ENCODE measurements at regions of chr22 and their contacts with region 1.

Region 1: DNA sequence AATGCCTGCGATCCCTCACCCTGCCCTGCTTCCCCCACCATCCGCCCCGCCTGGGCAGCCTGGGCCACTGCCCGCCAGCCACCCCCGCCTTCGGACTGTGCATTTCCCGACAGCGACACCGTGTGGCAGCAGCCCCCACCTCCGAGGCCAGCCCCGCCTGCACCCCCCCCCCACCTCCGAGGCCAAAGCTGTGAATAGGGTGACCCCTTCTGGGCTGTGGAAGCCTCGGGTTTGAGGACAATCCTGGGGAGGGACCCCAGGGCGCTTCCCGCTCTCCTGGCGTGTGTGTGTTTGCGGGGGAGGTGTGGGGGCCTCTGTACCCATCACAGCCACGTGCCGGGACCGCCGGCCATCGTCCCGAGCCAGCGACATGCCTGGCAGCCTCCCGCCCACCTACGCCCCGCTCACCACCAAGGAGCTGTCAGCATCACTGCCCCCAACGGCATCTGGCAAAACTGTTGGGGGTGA is 33.8 kb upstream of the PPARA start:
- DNase-seq: peak; percentile 90
- ATAC-seq: peak; percentile 95
- H3K4me3 Mint-ChIP-seq: no peak overlapping the region
- H3K27ac Mint-ChIP-seq: no peak overlapping the region
- H3K4me1 Mint-ChIP-seq: no peaks in the 10 kb centered on the region
- H3K27me3 Mint-ChIP-seq: no peaks in the 10 kb centered on the region
- CTCF ChIP-seq: peak; percentile 83

Region 2: DNA sequence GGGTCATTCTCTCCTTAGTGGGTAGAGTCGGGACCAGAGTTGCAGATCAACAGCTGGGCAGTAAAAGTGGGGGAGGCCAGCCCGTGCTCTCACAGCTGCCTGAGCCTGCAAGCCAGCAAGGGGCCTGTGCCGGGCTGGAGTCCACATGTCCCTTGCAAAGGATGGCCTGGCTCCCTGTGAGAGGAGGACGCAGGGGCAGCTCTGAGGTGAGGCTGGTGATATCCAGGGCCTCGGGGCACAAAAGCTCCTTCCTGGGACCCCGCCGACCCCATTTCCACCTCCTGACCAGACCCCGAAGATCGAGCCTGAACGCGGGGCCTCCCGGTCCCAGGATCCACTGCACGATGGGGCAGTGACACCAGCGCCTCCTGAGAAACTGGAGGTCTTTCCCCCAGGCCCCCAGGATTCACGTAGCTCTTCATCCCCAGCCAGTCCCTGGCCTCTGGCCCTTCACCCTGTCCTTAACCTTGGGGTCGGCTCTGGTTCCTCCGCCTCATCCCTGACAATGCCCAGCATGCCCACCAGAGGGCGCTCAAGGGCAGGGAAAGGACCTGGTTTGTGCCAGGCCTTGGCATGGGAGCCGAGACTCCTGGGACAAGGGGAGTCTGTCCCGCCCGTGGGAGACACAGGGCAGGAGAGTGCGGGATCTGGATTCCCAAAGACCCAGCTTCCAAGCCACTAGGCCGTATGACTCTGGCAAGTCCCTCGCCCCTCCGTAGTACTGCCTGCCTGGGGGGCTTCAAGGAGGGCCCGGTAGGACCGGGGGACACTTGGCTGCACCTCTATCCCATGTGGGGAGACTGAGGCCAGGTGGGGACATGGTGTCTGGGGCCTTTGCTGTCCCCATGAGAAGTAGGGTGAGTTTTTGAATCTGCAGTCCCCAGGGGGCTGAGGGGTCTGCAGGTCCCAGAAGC is 121.8 kb before region 1 on chr22:
- CTCF ChIA-PET with region 1: interaction called, 78 read pairs
- POLR2A ChIA-PET with region 1: interaction called, 7 read pairs
- intact Hi-C with region 1: loop called (anchors 2 kb)
- DNase-seq: peak; percentile 83
- ATAC-seq: peak; percentile 81
- H3K4me3 Mint-ChIP-seq: no peak overlapping the region
- H3K27ac Mint-ChIP-seq: no peak overlapping the region
- H3K4me1 Mint-ChIP-seq: no peaks in the 10 kb centered on the region
- H3K27me3 Mint-ChIP-seq: peaks cover 2% of the 10 kb centered on the region
- CTCF ChIP-seq: peak; percentile 96

Region 3: GRCh38 chr22:46013460-46014416 is 102.8 kb before region 1 on chr22:
- CTCF ChIA-PET with region 1: interaction called, 110 read pairs
- POLR2A ChIA-PET with region 1: interaction called, 3 read pairs
- intact Hi-C with region 1: loop called (anchors 5 kb)
- DNase-seq: peak; percentile 95
- ATAC-seq: peak; percentile 99
- H3K4me3 Mint-ChIP-seq: peak overlapping the region; percentile 76
- H3K27ac Mint-ChIP-seq: peak overlapping the region; percentile 87
- H3K4me1 Mint-ChIP-seq: peaks cover 4% of the 10 kb centered on the region
- H3K27me3 Mint-ChIP-seq: no peaks in the 10 kb centered on the region
- CTCF ChIP-seq: peak; percentile 73

Region 4: GRCh38 chr22:46019351-46019750 is 97.2 kb before region 1 on chr22:
- CTCF ChIA-PET with region 1: interaction called, 21 read pairs
- POLR2A ChIA-PET with region 1: no interaction called
- intact Hi-C with region 1: loop called (anchors 5 kb)
- DNase-seq: no peak
- ATAC-seq: no peak
- H3K4me3 Mint-ChIP-seq: no peak overlapping the region
- H3K27ac Mint-ChIP-seq: no peak overlapping the region
- H3K4me1 Mint-ChIP-seq: no peaks in the 10 kb centered on the region
- H3K27me3 Mint-ChIP-seq: no peaks in the 10 kb centered on the region
- CTCF ChIP-seq: no peak

Region 5: DNA sequence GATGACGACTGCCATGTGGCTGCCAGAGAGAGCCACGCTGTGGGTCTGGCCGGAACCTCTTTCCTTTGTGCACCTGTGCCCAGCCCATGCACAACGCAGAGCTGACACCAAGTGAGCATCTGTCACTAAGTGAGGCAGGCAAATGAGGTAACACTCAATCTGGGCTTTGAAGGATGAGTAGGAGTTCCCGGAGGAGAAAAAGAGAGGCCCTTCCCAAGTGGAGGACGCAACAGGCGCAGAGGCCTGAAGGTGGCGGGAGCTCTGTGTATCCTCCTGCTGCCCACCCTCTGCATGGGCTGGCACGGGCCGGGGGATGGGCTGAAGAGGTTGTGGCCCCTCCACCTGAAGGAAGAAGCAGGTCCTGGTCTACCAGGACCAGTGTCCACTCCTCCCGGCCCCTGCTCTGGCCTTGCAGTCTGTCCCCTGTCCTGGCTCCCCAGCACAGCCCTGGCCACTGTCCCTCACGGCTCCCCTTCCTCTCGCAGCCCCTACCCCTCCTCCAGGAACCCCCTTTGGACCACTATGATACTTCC is 10.4 kb after region 1 on chr22:
- CTCF ChIA-PET with region 1: no interaction called
- POLR2A ChIA-PET with region 1: no interaction called
- intact Hi-C with region 1: no loop called
- DNase-seq: no peak
- ATAC-seq: no peak
- H3K4me3 Mint-ChIP-seq: no peak overlapping the region
- H3K27ac Mint-ChIP-seq: no peak overlapping the region
- H3K4me1 Mint-ChIP-seq: no peaks in the 10 kb centered on the region
- H3K27me3 Mint-ChIP-seq: no peaks in the 10 kb centered on the region
- CTCF ChIP-seq: no peak

Measured in activated CD8-positive, alpha-beta T cell treated with anti-CD3 and anti-CD28 coated beads for 36 hours (primary cell).